GM10248 (cell line): ENCODE measurements at regions of chr12 and their contacts with region 1.

Region 1: DNA sequence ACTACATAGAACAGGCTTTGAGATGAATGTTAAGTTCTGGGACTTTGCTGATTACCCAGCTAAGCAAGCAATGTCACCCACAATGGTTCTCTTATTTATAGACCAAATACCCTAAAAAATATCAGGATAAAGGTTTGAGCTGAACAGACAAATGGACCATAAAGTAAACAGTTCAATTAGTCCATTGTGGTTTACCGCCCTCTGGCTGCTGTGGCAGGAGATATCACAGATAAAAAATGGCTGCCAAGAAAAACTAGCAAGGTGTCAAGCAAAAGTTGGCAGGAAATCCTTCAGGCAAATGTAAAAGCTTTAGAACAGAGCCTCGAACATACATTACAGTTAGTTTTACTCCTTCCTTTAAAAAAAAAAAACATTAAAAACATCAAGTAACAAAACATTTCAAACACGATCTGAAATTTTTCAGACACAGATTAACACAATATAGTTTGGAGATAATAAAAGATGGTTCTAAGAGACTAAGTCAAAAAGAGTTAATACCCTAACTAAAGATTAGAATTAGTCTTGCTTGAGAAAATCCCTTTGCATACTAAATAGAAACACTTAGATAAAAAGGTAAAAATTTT is 41.3 kb downstream of the MED13L start:
- DNase-seq: peak; percentile 45
- CTCF ChIP-seq: peak; percentile 68

Region 2: GRCh38 chr12:115946867-115947696 is 289.2 kb before region 1 on chr12:
- CTCF ChIA-PET with region 1: no interaction called
- POLR2A ChIA-PET with region 1: no interaction called
- DNase-seq: no peak
- CTCF ChIP-seq: peak; percentile 31

Region 3: DNA sequence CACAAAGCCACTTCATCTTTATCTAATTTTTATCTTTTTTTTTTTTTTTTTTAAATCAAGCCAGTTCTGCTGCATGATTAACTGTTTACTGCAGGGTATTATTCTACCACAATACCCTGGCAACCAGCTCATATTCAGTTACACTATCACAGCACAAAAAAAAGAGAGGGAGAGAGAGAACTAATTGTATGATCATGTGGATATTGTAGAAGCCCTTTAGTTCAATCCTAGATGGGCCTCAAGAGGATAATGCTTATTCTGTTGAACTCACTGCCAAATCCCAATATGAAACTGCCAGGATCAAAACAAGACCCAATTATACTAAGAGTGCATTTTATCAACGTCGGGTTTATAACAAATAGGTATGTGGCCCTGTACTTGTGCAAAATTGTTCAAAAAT is 10.2 kb before region 1 on chr12:
- CTCF ChIA-PET with region 1: interaction called, 39 read pairs
- POLR2A ChIA-PET with region 1: no interaction called
- DNase-seq: no peak
- CTCF ChIP-seq: no peak

Region 4: DNA sequence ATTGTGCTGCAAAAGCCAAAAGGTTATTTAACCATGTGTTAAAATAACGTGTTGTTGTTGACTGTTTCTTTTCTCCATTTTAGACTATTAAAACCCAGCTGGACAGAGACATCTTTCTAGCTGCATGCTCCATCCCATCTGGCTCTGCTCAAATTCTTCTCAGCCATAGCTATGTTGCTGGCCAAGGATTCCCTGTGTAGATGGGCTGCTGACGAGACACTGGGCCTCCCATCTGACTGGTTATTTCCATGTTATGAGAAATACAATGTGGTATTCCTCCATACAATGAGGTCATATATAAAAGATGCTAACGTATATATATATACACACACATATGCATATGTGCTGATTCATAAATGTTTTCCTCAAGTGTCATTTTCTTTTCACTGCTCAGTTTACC is 11.1 kb after region 1 on chr12:
- CTCF ChIA-PET with region 1: interaction called, 12 read pairs
- POLR2A ChIA-PET with region 1: interaction called, 3 read pairs
- DNase-seq: no peak
- CTCF ChIP-seq: no peak

Region 5: GRCh38 chr12:116257215-116257614 is 21.0 kb after region 1 on chr12:
- CTCF ChIA-PET with region 1: interaction called, 11 read pairs
- POLR2A ChIA-PET with region 1: no interaction called
- DNase-seq: no peak
- CTCF ChIP-seq: no peak

Region 6: GRCh38 chr12:116737774-116738700 is 501.8 kb after region 1 on chr12 and contains the starts of genes RNFT2 and SPRING1:
- CTCF ChIA-PET with region 1: no interaction called
- POLR2A ChIA-PET with region 1: no interaction called
- DNase-seq: peak; percentile 100
- CTCF ChIP-seq: no peak